ENCODE measurements at regions of chr17 and their contacts with region 1.

Region 1: GRCh38 chr17:67452681-67453554 is 75.8 kb downstream of the PITPNC1 start:
- DNase-seq: peak; percentile 63 to 82 (median 75)
- H3K4me3 ChIP-seq: peak overlapping the region in 1 of 2 donors; percentile 17
- H3K4me3 Mint-ChIP-seq: peak overlapping the region; percentile 71 to 86 (median 80)
- H3K27ac ChIP-seq: peak overlapping the region; percentile 34
- H3K27ac Mint-ChIP-seq: peak overlapping the region; percentile 89 to 96 (median 96)
- H3K4me1 ChIP-seq: peaks cover 86% of the 10 kb centered on the region
- H3K4me1 Mint-ChIP-seq: peaks cover 56 to 100% (median 79%) of the 10 kb centered on the region in 4 donors
- H3K27me3 ChIP-seq: no peaks in the 10 kb centered on the region
- H3K27me3 Mint-ChIP-seq: no peaks in the 10 kb centered on the region

Region 2: GRCh38 chr17:67421869-67422273 is 31.0 kb before region 1 on chr17:
- CTCF ChIA-PET with region 1: interaction called, 6 read pairs
- POLR2A ChIA-PET with region 1: interaction called, 36 read pairs
- intact Hi-C with region 1: loop called (anchors 1 kb)
- DNase-seq: peak; percentile 78 to 89 (median 83)
- H3K4me3 ChIP-seq: peak overlapping the region in 1 of 2 donors; percentile 15
- H3K4me3 Mint-ChIP-seq: peak overlapping the region in 7 of 8 donors; percentile 19 to 80 (median 64)
- H3K27ac ChIP-seq: peak overlapping the region; percentile 77
- H3K27ac Mint-ChIP-seq: peak overlapping the region; percentile 85 to 98 (median 97)
- H3K4me1 ChIP-seq: peaks cover 65% of the 10 kb centered on the region
- H3K4me1 Mint-ChIP-seq: peaks cover 47 to 92% (median 72%) of the 10 kb centered on the region in 4 donors
- H3K27me3 ChIP-seq: no peaks in the 10 kb centered on the region
- H3K27me3 Mint-ChIP-seq: no peaks in the 10 kb centered on the region

Region 3: GRCh38 chr17:67431249-67432048 is 21.5 kb before region 1 on chr17:
- CTCF ChIA-PET with region 1: interaction called, 7 read pairs
- POLR2A ChIA-PET with region 1: interaction called, 43 read pairs
- intact Hi-C with region 1: loop called (anchors 2 kb)
- DNase-seq: peak in 1 of 5 donors; percentile 19
- H3K4me3 ChIP-seq: no peak overlapping the region
- H3K4me3 Mint-ChIP-seq: peak overlapping the region in 6 of 8 donors; percentile 7 to 58 (median 42)
- H3K27ac ChIP-seq: no peak overlapping the region
- H3K27ac Mint-ChIP-seq: peak overlapping the region; percentile 56 to 99 (median 77)
- H3K4me1 ChIP-seq: peaks cover 64% of the 10 kb centered on the region
- H3K4me1 Mint-ChIP-seq: peaks cover 43 to 82% (median 57%) of the 10 kb centered on the region in 4 donors
- H3K27me3 ChIP-seq: no peaks in the 10 kb centered on the region
- H3K27me3 Mint-ChIP-seq: no peaks in the 10 kb centered on the region

Region 4: GRCh38 chr17:67469208-67469895 is 16.4 kb after region 1 on chr17:
- CTCF ChIA-PET with region 1: interaction called, 80 read pairs
- POLR2A ChIA-PET with region 1: interaction called, 104 read pairs
- intact Hi-C with region 1: loop called (anchors 2 kb)
- DNase-seq: peak in 2 of 5 donors; percentile 26 to 52
- H3K4me3 ChIP-seq: peak overlapping the region; percentile 23 to 30
- H3K4me3 Mint-ChIP-seq: peak overlapping the region; percentile 75 to 85 (median 79)
- H3K27ac ChIP-seq: peak overlapping the region; percentile 29
- H3K27ac Mint-ChIP-seq: peak overlapping the region; percentile 81 to 91 (median 90)
- H3K4me1 ChIP-seq: peaks cover 65% of the 10 kb centered on the region
- H3K4me1 Mint-ChIP-seq: peaks cover 49 to 81% (median 62%) of the 10 kb centered on the region in 4 donors
- H3K27me3 ChIP-seq: no peaks in the 10 kb centered on the region
- H3K27me3 Mint-ChIP-seq: no peaks in the 10 kb centered on the region

Measured in CD4-positive, alpha-beta memory T cell (primary cell).